ENCODE measurements at regions of chr15 and their contacts with region 1.

Region 1: DNA sequence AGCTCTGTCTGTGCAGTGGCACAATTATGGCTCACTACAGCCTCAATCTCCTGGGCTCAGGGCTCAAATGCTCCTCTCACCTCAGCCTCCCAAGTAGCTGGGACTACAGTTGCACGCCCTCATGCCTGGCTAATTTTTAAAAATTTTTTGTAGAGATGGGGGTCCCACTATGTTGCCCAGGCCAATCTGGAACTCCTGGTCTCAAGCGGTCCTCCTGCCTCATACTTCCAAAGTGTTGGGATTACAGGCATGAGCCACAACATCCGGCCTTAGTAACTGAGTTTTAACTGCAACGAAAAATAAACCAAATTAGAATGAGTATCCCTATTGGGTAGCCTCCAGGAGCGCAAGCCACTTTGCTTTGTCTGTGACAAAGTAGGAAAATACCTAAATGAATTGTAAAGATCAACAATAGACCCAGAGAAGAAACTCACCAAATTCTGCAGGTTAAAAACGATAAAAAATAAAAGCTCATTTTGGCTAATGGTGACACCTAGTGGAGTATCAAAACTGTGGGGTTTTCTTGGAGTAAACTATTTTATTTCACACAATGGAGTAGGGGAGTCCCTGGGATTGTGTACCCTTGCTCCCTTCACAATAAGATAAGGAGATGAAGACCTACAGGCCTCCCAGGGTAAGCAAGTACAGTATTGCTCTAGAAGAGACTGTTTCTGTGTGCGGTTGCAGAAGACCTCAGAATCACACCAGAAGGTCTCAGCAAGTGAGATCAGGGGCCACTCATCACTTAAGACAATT is 21.0 kb upstream of the CA12 start:
- DNase-seq: peak; percentile 57
- ATAC-seq: peak; percentile 76
- H3K4me3 ChIP-seq: no peak overlapping the region
- H3K27ac ChIP-seq: no peak overlapping the region
- H3K4me1 ChIP-seq: peaks cover 7% of the 10 kb centered on the region; the same call in 1 of the 2 replicates
- H3K27me3 ChIP-seq: no peaks in the 10 kb centered on the region
- CTCF ChIP-seq: peak; percentile 77
- POLR2A ChIP-seq: no peak
- RAD21 ChIP-seq: peak; percentile 79

Region 2: DNA sequence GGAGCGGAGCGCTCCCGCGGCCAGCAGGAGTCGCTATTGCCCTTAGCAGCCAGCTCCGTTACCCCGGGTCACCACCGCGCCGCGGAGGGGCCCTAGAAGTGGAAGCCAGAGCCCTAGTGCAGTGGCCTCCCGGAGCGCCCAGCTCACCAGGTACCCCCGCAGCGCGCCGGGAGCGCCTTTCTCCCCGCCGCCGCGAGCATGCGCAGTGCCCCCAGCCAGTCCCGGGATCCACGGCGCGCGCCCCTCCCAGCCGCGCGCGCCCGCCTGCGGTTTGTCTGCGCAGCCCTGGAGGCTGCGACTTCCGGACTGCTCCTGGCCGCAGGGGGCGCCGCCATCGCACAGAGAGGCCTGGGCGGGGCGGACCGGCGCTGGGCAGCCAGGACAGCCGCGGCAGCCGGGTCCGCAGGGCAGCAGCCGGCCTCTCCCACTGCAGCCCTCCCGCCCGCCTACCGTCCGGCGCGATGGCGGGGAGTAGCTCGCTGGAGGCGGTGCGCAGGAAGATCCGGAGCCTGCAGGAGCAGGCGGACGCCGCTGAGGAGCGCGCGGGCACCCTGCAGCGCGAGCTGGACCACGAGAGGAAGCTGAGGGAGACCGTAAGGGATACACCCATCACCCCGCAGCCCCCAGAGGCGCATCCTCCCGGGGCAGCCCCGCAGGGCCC is 354.4 kb before region 1 on chr15:
- CTCF ChIA-PET with region 1: no interaction called
- POLR2A ChIA-PET with region 1: no interaction called
- dilution Hi-C with region 1: no loop called
- in situ Hi-C with region 1: no loop called
- intact Hi-C with region 1: loop called (anchors 2 kb)
- DNase-seq: peak; percentile 92
- ATAC-seq: peak; percentile 60
- H3K4me3 ChIP-seq: peak overlapping the region; percentile 84
- H3K27ac ChIP-seq: peak overlapping the region; percentile 92
- H3K4me1 ChIP-seq: peaks cover 22% of the 10 kb centered on the region
- H3K27me3 ChIP-seq: no peaks in the 10 kb centered on the region
- CTCF ChIP-seq: peak; percentile 82
- POLR2A ChIP-seq: peak; percentile 79
- RAD21 ChIP-seq: peak; percentile 80

Region 3: DNA sequence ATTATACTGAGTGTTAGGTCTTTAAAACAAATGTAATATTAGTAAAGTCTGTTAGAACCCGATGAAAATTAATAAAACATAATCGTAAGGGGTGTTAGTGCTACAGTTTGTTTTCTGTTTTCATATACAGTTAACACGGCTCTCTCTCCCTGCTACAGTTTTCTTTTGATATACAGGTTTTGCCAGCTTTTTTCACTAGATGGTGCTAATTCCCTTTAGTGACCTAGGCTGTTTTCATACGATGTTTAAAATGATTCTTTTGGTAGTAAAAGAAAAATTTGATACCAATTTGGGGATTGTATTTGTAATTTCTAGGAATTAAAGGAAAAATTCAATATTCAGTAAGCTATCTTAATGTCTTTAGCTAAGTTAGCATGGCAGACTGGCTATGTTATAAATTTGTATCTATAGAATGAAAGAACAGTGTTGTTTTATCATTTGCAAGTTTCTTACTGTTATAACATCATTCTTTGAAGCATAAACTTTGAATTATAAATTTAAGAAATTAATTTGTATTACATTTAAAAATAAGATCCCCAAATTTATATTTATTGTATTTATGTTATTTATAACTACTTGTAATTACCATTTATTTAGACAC is 113.8 kb before region 1 on chr15:
- CTCF ChIA-PET with region 1: interaction called, 4 read pairs
- POLR2A ChIA-PET with region 1: no interaction called
- dilution Hi-C with region 1: no loop called
- in situ Hi-C with region 1: loop called (anchors 5 kb)
- intact Hi-C with region 1: loop called (anchors 1 kb)
- DNase-seq: peak; percentile 69
- ATAC-seq: peak; percentile 68
- H3K4me3 ChIP-seq: no peak overlapping the region
- H3K27ac ChIP-seq: no peak overlapping the region
- H3K4me1 ChIP-seq: peaks cover 2% of the 10 kb centered on the region; the same call in 1 of the 2 replicates
- H3K27me3 ChIP-seq: no peaks in the 10 kb centered on the region
- CTCF ChIP-seq: peak; percentile 86
- POLR2A ChIP-seq: no peak
- RAD21 ChIP-seq: peak; percentile 88

Region 4: DNA sequence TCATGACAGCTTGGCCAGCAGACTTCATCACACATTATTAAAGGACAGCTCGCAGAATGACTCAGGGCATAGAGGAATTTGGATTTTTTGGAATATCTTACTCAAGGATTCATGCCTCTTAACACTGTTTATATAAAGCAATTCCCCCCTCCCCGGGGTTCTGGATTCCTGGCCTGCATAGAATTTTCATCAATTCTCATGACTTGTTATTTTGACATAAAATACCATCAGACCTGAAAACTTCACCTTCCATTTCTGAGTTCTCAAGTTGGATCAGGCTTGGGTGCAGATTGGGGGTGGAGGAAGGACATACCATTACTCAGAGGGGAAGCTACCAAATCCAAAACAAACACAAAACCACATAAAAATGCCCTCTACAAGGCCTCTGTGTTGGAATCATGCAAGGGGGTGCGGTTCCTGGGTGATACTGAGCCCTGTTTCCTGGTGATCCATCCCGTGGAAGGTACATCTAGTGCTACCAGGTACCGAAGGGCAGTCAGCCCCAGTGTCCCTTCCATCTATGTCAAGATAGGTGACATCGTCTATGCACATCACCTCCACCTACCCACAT is 548.3 kb after region 1 on chr15:
- CTCF ChIA-PET with region 1: no interaction called
- POLR2A ChIA-PET with region 1: no interaction called
- dilution Hi-C with region 1: no loop called
- in situ Hi-C with region 1: no loop called
- intact Hi-C with region 1: no loop called
- DNase-seq: peak; percentile 87
- ATAC-seq: peak; percentile 93
- H3K4me3 ChIP-seq: no peak overlapping the region
- H3K27ac ChIP-seq: peak overlapping the region; percentile 78
- H3K4me1 ChIP-seq: peaks cover 12% of the 10 kb centered on the region
- H3K27me3 ChIP-seq: no peaks in the 10 kb centered on the region
- CTCF ChIP-seq: no peak
- POLR2A ChIP-seq: no peak
- RAD21 ChIP-seq: no peak